WTC11 (cell line): ENCODE measurements at regions of chr9 and their contacts with region 1.

Region 1: GRCh38 chr9:113446323-113446740 is 17.2 kb upstream of the RGS3 start:
- DNase-seq: no peak
- ATAC-seq: peak; percentile 48
- H3K4me3 Mint-ChIP-seq: no peak overlapping the region
- H3K27ac Mint-ChIP-seq: 0 out of 2 replicates have a peak overlapping the region, but pooled peaks have one; percentile 87
- H3K4me1 Mint-ChIP-seq: peaks cover 8% of the 10 kb centered on the region; the same call in 1 of the 2 replicates
- H3K27me3 Mint-ChIP-seq: no peaks in the 10 kb centered on the region
- CTCF ChIP-seq: 0 out of 2 replicates have a peak, but pooled peaks have one; percentile 33

Region 2: DNA sequence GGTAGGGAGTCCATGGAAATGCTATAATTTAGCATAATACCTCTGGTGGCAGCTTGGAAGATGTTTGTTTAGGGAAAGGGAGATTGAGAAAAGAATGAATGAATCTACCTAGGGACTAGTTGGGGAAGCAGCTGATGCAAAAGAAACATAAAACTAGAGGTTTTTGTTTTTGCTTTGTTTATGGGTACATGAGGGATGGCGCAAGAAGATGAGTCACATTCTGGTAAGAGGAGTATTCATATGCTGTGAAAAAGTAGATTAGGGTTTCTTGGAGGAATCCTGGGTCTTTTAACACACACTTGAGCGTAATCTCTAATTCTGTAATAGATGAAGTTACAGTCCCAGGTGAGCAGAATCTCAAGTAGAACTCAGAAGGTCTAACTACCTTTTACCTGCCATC is 18.7 kb before region 1 on chr9:
- CTCF ChIA-PET with region 1: no interaction called
- POLR2A ChIA-PET with region 1: no interaction called
- DNase-seq: no peak
- ATAC-seq: no peak
- H3K4me3 Mint-ChIP-seq: no peak overlapping the region
- H3K27ac Mint-ChIP-seq: no peak overlapping the region
- H3K4me1 Mint-ChIP-seq: peaks cover 10% of the 10 kb centered on the region
- H3K27me3 Mint-ChIP-seq: peaks cover 26% of the 10 kb centered on the region
- CTCF ChIP-seq: no peak

Region 3: DNA sequence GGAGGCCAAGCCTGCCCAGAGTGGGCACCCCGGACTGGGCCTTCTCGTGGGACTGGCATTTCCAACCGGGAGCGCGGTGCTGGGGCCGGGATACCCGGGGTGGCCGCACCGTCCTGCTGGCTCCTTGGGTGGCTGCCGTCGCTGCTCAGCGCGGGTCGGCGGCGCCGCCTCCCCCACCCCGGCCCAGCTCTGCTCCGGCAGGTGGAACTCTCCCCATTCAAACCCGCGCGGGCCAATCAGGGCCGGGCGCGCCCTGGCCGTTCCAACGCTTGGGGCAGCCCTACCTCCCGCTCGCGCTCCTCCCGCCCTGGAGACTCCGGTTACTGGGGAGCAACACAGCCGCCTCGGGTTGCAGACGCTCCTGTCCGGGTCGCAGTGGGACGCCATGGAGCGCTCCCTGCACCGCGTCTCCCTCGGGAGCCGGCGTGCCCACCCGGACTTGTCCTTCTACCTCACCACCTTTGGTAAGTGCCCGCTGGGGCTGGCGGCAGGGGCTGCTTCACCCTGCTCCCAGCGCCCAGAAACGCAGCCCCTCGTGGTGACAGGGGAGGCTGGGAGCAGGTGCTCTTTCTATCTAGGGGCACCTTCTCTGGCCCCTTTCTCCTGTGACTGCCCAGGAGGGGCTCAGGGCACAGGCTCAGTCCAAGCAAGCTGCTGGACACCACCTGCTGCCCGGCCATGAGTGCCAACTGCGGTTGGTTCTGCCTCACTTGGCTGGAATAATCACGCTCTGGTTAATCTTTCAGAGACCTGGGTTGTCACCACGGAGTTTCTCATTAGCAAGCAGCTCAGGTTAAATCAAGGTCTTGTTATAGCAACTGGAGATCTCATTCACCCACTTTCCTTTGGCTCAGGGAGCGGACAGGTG is 17.3 kb after region 1 on chr9 and contains the start of gene RGS3:
- CTCF ChIA-PET with region 1: interaction called, 13 read pairs
- POLR2A ChIA-PET with region 1: no interaction called
- DNase-seq: peak; percentile 86
- ATAC-seq: peak; percentile 100
- H3K4me3 Mint-ChIP-seq: peak within 1 kb of the TSS; percentile 68
- H3K27ac Mint-ChIP-seq: no peak within 1 kb of the TSS
- H3K4me1 Mint-ChIP-seq: peaks cover 20% of the 10 kb centered on the region
- H3K27me3 Mint-ChIP-seq: peaks cover 40% of the 10 kb centered on the region
- CTCF ChIP-seq: no peak
- total RNA-seq, gene RGS3: 15.0 to 17.2 TPM (median 16.6 TPM) in 3 replicates

Region 4: DNA sequence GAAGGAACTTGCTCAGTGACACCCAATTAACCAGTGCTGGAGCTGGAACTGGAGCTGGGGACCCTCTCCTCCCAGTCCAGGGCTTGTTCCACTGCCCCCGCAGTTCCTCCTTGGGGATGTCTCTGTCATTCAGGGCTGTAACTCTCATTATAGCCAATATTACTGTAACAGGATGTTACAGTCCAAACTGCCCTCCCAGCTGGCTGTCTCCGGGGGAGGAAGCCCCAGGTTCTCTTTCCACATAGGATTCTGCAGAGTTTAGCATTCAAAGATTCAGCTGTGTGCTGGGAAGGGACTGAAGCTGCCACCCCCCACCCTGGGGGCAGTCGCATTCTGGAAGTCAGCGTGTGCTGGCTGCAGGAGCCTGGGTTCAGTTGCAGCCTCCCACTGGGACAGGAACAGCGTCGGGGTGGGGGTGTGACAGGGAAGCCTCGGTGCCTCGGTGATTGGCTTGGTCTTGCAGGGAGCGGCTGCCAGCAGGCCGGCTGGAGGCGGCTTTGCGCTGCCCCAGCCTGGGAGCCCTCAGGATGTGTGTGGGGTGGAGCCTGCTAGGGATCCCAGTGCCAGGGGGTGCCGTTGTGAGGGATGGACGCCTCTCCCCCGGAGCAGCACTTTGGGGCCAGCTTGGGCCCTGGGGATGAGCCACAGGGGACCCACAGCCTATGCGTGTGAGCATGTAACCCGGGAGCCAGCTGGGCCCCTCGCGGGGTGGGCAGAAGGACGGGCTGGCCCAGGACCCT is 118.3 kb after region 1 on chr9:
- CTCF ChIA-PET with region 1: interaction called, 12 read pairs
- POLR2A ChIA-PET with region 1: no interaction called
- DNase-seq: peak; percentile 64
- ATAC-seq: peak; percentile 90
- H3K4me3 Mint-ChIP-seq: peak overlapping the region; percentile 74
- H3K27ac Mint-ChIP-seq: no peak overlapping the region
- H3K4me1 Mint-ChIP-seq: peaks cover 17% of the 10 kb centered on the region
- H3K27me3 Mint-ChIP-seq: no peaks in the 10 kb centered on the region; the same call in 1 of the 2 replicates
- CTCF ChIP-seq: no peak

Region 5: DNA sequence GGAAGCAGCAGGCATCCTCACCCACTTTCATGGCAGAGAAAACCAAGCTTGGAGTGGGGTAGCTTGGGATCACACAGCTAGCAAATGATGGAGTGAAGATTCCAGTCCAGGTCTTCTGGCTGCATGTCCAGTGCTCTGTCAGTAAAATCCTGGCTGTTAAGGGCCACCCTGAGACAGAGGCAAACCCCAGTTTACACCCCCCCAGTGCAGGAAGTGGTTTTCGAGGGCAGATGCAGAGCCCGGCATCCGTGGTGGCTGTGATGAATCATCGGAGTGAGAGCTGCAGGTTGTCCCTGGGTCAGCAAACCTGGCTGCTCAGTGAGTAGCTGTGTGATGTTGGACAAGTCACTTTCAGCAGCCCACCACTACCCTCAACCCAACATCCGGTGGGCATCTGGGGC is 132.6 kb after region 1 on chr9:
- CTCF ChIA-PET with region 1: interaction called, 11 read pairs
- POLR2A ChIA-PET with region 1: no interaction called
- DNase-seq: no peak
- ATAC-seq: no peak
- H3K4me3 Mint-ChIP-seq: no peak overlapping the region
- H3K27ac Mint-ChIP-seq: no peak overlapping the region
- H3K4me1 Mint-ChIP-seq: peaks cover 24% of the 10 kb centered on the region
- H3K27me3 Mint-ChIP-seq: no peaks in the 10 kb centered on the region
- CTCF ChIP-seq: no peak

Region 6: GRCh38 chr9:113602126-113603044 is 156.1 kb after region 1 on chr9:
- CTCF ChIA-PET with region 1: interaction called, 10 read pairs
- POLR2A ChIA-PET with region 1: no interaction called
- DNase-seq: peak; percentile 76
- ATAC-seq: peak; percentile 81
- H3K4me3 Mint-ChIP-seq: no peak overlapping the region
- H3K27ac Mint-ChIP-seq: peak overlapping the region; percentile 72; the same call in 1 of the 2 replicates
- H3K4me1 Mint-ChIP-seq: peaks cover 37% of the 10 kb centered on the region
- H3K27me3 Mint-ChIP-seq: peaks cover 2% of the 10 kb centered on the region
- CTCF ChIP-seq: no peak